Activated B cell treated with CpG ODN at 0.5 μM for 24 hours (primary cell): ENCODE measurements at regions of chr20 and their contacts with region 1.

Region 1: GRCh38 chr20:32507998-32508774 is 76.9 kb downstream of the NOL4L start:
- DNase-seq: no peak
- ATAC-seq: no peak
- H3K4me3 Mint-ChIP-seq: no peak overlapping the region
- H3K27ac Mint-ChIP-seq: peak overlapping the region; percentile 46
- H3K4me1 Mint-ChIP-seq: peaks cover 42% of the 10 kb centered on the region
- H3K27me3 Mint-ChIP-seq: no peaks in the 10 kb centered on the region
- CTCF ChIP-seq: no peak

Region 2: GRCh38 chr20:32614772-32615171 is 106.6 kb after region 1 on chr20:
- CTCF ChIA-PET with region 1: no interaction called
- POLR2A ChIA-PET with region 1: interaction called, 18 read pairs
- intact Hi-C with region 1: no loop called
- DNase-seq: no peak
- ATAC-seq: no peak
- H3K4me3 Mint-ChIP-seq: no peak overlapping the region
- H3K27ac Mint-ChIP-seq: no peak overlapping the region
- H3K4me1 Mint-ChIP-seq: no peaks in the 10 kb centered on the region
- H3K27me3 Mint-ChIP-seq: peaks cover 26% of the 10 kb centered on the region
- CTCF ChIP-seq: no peak